ENCODE measurements at regions of chr2 and their contacts with region 1.

Region 1: DNA sequence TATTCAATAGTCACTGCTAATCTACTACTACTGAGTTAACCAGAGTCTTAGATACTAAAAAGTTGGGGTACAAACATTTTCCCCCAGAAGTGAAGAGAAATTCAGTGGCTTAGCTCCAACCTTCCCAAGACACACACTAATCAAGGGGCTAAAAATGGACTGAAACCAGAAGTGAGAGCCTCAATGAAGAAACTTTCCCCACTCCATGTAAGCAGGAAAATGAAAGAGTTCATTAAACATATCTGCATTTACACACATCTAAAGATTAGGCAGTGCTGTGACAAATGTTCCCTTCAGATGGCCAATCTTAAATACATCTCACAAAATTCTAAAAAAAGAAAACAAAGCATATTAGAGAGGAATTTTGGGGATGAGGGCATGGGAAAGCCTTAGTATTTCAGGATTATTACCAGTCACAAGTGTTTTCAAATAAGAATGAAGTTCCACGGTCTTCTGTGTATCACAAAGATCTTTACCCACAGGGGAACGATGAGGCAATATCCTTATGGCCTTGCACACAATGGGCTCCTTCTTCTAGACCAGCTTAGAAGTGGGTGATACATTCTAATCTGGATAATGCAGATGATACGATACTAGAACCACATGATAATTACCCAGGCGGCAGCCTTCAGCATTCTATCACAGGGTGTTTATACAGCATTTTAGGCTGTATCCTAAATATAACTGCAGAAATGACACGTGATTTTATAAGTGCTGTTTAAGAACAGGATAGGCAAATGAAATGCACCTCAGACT is 17.1 kb downstream of the ANKRD44 start:
- DNase-seq: peak in 5 of 9 experiments; percentile 37 to 73 (median 51)
- ATAC-seq: peak; percentile 70
- H3K4me3 ChIP-seq: peak overlapping the region; percentile 11 to 18
- H3K4me3 Mint-ChIP-seq: peak overlapping the region; percentile 73
- H3K27ac ChIP-seq: peak overlapping the region; percentile 41 to 88
- H3K27ac Mint-ChIP-seq: peak overlapping the region; percentile 94
- H3K4me1 ChIP-seq: peaks cover 97% of the 10 kb centered on the region
- H3K4me1 Mint-ChIP-seq: peaks cover 86% of the 10 kb centered on the region
- H3K27me3 ChIP-seq: no peaks in the 10 kb centered on the region
- H3K27me3 Mint-ChIP-seq: no peaks in the 10 kb centered on the region
- CTCF ChIP-seq: no peak

Region 2: DNA sequence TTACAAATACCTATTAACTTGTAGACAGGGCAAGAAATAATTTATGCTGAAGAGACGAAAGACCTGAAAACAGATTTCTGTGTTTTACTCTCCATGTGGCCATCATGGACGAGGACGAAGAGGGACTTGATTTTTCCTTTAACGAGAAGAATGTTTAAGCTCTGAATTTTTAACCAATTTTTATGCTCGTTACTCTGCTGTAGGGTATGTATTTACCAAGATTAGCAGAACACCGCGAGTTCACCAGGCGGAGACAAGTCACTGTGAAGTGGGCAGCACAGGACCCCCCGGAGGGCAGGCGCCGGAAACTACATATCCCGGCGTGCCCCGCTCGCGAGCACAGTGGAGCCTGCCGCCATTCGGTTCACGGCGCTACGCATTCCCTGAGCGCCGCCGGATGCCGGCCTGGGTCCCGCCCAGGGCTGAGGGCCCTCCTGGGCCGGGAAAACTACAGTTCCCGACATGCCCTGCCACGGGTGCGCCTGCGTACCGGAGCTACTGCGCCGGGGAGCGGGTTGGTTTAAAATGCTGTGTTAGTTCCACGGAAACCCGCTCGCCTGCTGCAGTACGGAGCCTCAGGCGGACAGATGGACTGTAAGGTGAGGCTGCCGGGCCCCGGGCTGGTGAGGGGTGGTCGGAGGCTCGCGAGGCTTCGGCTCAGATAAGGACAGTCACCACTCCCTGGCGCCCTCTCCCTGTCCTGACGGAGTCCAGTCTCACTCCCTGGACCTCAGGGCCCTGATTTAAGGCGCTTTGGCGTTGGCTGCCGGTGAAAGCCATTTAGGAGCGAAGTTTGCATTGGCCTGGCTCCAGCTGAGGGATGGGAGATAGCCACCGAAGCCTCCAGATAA is 654.0 kb before region 1 on chr2 and contains the start of gene CCDC150:
- CTCF ChIA-PET with region 1: no interaction called
- POLR2A ChIA-PET with region 1: no interaction called
- intact Hi-C with region 1: no loop called
- DNase-seq: peak; percentile 89 to 96 (median 94)
- ATAC-seq: peak; percentile 100
- H3K4me3 ChIP-seq: peak within 1 kb of the TSS; percentile 68 to 85
- H3K4me3 Mint-ChIP-seq: peak within 1 kb of the TSS; percentile 86
- H3K27ac ChIP-seq: peak within 1 kb of the TSS; percentile 12 to 27
- H3K27ac Mint-ChIP-seq: peak within 1 kb of the TSS; percentile 38
- H3K4me1 ChIP-seq: peaks cover 7% of the 10 kb centered on the region
- H3K4me1 Mint-ChIP-seq: peaks cover 13% of the 10 kb centered on the region
- H3K27me3 ChIP-seq: no peaks in the 10 kb centered on the region
- H3K27me3 Mint-ChIP-seq: no peaks in the 10 kb centered on the region
- CTCF ChIP-seq: no peak
- total RNA-seq, gene CCDC150: 0.72 to 0.81 TPM

Region 3: GRCh38 chr2:197229509-197230443 is 63.7 kb before region 1 on chr2:
- CTCF ChIA-PET with region 1: no interaction called
- POLR2A ChIA-PET with region 1: no interaction called
- intact Hi-C with region 1: no loop called
- DNase-seq: no peak
- ATAC-seq: no peak
- H3K4me3 ChIP-seq: no peak overlapping the region
- H3K4me3 Mint-ChIP-seq: peak overlapping the region; percentile 4
- H3K27ac ChIP-seq: peak overlapping the region in 1 of 2 experiments; percentile 22
- H3K27ac Mint-ChIP-seq: peak overlapping the region; percentile 89
- H3K4me1 ChIP-seq: peaks cover 88% of the 10 kb centered on the region
- H3K4me1 Mint-ChIP-seq: peaks cover 95% of the 10 kb centered on the region
- H3K27me3 ChIP-seq: no peaks in the 10 kb centered on the region
- H3K27me3 Mint-ChIP-seq: no peaks in the 10 kb centered on the region
- CTCF ChIP-seq: no peak

Region 4: GRCh38 chr2:197279997-197280746 is 13.3 kb before region 1 on chr2:
- CTCF ChIA-PET with region 1: interaction called, 3 read pairs
- POLR2A ChIA-PET with region 1: interaction called, 5 read pairs
- intact Hi-C with region 1: loop called in 1 of 2 experiments (anchors 2 kb)
- DNase-seq: peak in 1 of 9 experiments; percentile 49
- ATAC-seq: peak; percentile 69
- H3K4me3 ChIP-seq: peak overlapping the region; percentile 1 to 40
- H3K4me3 Mint-ChIP-seq: peak overlapping the region; percentile 65
- H3K27ac ChIP-seq: peak overlapping the region; percentile 8 to 19
- H3K27ac Mint-ChIP-seq: peak overlapping the region; percentile 90
- H3K4me1 ChIP-seq: peaks cover 81% of the 10 kb centered on the region
- H3K4me1 Mint-ChIP-seq: peaks cover 87% of the 10 kb centered on the region
- H3K27me3 ChIP-seq: no peaks in the 10 kb centered on the region
- H3K27me3 Mint-ChIP-seq: no peaks in the 10 kb centered on the region
- CTCF ChIP-seq: no peak

Measured in CD8-positive, alpha-beta T cell (primary cell).